ENCODE measurements at regions of chr6 and their contacts with region 1.

Region 1: GRCh38 chr6:141443659-141444289 is 689.0 kb upstream of the GJE1 start:
- DNase-seq: no peak
- ATAC-seq: no peak
- H3K4me3 ChIP-seq: no peak overlapping the region
- H3K27ac ChIP-seq: no peak overlapping the region
- H3K4me1 ChIP-seq: no peaks in the 10 kb centered on the region
- H3K27me3 ChIP-seq: no peaks in the 10 kb centered on the region
- CTCF ChIP-seq: no peak
- EP300 ChIP-seq: no peak
- POLR2A ChIP-seq: no peak
- RAD21 ChIP-seq: no peak

Region 2: DNA sequence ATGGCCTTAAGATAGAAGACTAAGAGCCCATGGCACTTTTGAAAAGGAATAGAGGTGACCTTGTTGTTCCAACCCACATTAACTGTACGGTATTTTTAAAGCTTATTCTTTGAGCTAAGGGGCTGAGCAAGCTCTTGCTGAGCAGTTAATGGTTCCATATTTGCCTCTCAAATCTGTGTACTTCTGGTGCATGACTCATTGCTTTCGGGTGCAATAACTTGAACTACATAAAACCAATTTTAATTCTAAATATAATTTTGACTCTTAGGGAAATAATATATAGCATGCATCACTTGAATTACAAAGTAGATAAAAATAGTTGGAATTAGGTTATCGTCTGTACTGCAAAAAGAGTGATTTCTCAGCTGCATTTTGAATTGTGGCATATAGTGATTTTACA is 1721.2 kb before region 1 on chr6:
- CTCF ChIA-PET with region 1: no interaction called
- POLR2A ChIA-PET with region 1: no interaction called
- in situ Hi-C with region 1: no loop called
- intact Hi-C with region 1: loop called (anchors 5 kb)
- DNase-seq: no peak
- ATAC-seq: no peak
- H3K4me3 ChIP-seq: no peak overlapping the region
- H3K27ac ChIP-seq: no peak overlapping the region
- H3K4me1 ChIP-seq: no peaks in the 10 kb centered on the region
- H3K27me3 ChIP-seq: no peaks in the 10 kb centered on the region
- CTCF ChIP-seq: no peak
- EP300 ChIP-seq: no peak
- POLR2A ChIP-seq: no peak
- RAD21 ChIP-seq: no peak

Measured in K562 (cell line).